Posterior cingulate gyrus (tissue), 11 donors: ENCODE measurements at regions of chr4 and their contacts with region 1.

Region 1: DNA sequence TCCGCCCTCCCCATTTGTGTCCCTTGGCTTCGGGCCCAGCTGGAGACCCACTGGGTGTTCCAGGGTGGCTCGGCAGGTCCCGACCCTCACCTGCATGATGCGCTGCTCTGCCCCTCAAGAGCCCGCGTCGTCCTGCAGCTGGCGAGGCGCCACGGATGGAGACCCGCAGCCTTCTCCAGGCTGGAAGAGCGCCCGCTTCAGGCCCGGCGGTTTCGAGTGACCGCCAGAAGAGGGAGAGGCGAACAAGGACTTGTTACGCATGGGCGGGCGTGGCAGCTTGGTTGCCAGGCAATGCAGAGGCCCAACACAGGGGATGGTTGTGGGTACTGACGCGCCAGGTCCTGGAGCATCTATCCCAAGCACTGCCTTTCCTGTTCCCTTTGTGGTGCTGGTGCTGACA is at the start of gene PDCL2:
- DNase-seq: peak in 1 of 10 donors; percentile 69

Region 2: DNA sequence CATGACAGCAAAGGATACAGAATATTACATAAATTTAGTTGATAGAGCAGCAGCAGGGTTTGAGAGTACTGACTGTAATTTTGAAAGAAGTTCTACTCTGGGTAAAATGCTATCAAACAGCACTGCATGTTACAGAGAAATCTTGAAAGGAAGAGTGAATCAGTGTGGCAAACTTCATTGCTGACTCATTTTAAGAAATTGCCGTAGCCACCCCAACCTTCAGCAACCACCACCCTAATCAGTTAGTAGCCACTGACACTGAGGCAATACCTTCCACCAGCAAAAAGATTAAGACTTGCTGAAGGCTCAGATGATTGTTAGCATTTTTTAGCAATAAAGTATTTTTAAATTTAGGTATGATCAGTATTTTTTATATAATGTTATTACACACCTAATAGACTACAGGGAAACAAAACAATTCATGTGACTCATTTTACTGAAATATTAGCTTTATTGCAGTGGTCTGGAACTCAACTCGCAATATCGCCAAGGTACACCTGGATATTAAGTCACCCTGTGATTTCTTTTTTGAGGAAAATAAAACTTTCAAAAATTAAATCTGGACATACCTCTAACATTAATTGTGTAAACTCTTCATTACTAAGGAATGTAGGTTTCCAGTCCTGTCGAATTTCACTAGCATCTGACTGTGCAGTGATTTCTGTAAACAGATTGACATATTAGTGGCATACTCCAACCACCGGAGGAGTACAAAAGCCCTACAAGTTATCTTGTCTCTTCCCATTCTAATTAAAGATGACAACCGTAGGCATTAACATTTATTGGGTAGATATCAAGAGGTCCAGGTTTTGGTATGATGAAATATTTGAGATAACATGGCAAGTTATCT is 116.4 kb before region 1 on chr4:
- intact Hi-C with region 1: no loop called
- DNase-seq: no peak

Region 3: DNA sequence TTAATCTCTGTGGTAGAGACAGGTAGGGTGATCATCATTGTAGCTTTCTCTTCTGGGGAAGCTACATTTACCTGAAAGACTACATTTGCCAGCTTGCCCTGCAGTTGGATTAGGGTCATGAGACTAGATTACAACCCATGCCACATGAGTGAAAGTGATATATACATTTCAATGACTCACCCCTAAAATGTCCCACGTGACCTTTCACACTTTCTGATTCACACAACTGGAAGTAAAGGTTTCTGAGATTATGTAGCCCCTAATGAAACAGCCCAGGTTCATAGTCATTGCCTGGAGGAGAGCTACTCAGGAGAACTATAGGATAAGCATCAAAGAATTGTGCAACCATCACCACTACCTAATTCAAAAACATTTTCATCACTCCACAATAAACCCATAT is 17.8 kb before region 1 on chr4:
- intact Hi-C with region 1: loop called (anchors 1 kb)
- DNase-seq: no peak